ENCODE measurements at regions of chr3 and their contacts with region 1.

Region 1: GRCh38 chr3:115692887-115693524 is 69.7 kb downstream of the GAP43 start:
- H3K4me3 Mint-ChIP-seq: no peak overlapping the region
- H3K27ac Mint-ChIP-seq: no peak overlapping the region
- H3K4me1 Mint-ChIP-seq: no peaks in the 10 kb centered on the region
- H3K27me3 Mint-ChIP-seq: peaks cover 5% of the 10 kb centered on the region

Region 2: DNA sequence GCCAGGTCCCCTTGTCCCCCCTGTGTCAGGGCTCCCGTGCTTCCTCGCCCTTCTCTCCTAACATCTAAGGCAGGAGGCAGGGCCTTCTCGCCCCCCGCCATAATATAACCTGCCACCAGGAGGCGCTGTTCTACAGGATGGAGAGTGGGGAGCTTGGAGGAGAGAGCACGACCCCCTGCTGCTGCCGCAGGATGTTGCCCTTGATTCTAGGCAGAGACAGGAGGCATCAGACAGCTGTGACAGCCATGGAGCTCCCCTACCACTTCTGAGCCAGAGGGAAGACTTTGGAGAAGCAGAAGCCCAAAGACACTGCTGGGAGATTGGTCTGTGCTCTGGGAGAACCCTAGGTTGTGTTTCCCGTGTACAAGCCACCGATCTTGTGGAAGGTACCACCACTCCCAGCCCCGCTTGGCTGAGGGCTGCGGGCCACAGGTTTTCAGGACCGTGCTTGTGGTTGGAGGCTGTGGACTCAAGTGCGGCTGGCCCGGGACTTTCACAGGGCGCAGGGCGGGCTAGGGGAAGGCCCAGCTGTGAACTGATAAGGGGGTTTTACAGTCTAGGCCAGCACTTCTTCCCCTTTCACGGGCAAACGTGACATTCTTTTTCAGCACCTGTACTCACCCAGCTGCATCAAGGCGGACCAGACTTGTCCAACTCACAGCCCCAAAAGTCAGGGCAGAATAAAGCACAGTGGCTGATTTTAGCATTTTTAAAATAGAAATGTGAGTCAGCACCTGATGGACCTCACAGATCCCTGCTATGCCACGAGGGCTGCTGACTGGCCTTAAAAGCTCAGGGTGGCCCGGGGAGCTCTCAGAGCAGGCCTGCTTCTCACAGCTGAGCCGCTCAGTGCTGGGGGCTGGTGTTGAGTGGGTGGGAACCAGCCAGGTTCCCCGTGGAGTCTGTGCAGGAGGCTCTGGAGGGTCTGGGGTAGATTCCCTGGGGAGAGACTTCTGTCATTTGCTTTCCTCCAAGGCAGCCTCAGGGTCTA is 1401.8 kb before region 1 on chr3:
- intact Hi-C with region 1: loop called (anchors 5 kb)
- H3K4me3 Mint-ChIP-seq: no peak overlapping the region
- H3K27ac Mint-ChIP-seq: no peak overlapping the region
- H3K4me1 Mint-ChIP-seq: peaks cover 6% of the 10 kb centered on the region
- H3K27me3 Mint-ChIP-seq: no peaks in the 10 kb centered on the region

Region 3: DNA sequence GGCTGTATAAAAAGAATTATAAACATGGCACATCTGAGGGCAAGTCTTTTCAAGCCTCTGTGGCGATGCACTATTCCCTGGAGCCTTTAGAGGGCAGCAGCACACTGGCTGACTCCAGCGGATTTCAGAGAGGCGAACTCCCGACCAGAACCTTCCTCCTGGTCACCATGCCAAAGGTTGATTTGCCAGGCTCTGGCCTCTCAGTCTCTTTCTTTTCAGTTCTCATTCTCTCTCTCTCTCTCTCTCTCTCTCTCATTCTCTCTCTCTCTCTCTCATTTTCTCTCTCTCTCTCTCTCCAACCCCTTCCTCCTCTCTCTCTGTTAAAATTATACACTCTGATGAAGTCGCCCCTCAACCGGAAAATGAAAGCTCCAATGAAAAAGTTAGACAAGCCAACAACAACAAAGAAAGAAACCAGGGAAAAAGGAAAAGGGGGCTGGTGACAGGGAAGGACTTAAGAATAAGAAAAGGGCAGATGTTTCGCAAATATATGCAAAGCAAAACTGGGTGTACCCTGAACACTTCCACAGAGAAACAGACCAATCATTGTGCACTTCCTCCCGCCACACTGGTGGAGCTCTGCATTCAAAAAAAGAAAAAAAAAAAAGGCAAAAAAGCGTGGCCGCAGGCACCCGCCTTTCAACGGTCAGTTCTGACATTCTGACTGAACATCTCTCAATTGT is 1309.0 kb before region 1 on chr3:
- intact Hi-C with region 1: loop called (anchors 10 kb)
- H3K4me3 Mint-ChIP-seq: peak overlapping the region; percentile 62
- H3K27ac Mint-ChIP-seq: peak overlapping the region; percentile 63
- H3K4me1 Mint-ChIP-seq: peaks cover 2% of the 10 kb centered on the region
- H3K27me3 Mint-ChIP-seq: no peaks in the 10 kb centered on the region

Region 4: GRCh38 chr3:114827495-114827894 is 865.5 kb before region 1 on chr3:
- intact Hi-C with region 1: loop called (anchors 5 kb)
- H3K4me3 Mint-ChIP-seq: no peak overlapping the region
- H3K27ac Mint-ChIP-seq: no peak overlapping the region
- H3K4me1 Mint-ChIP-seq: no peaks in the 10 kb centered on the region
- H3K27me3 Mint-ChIP-seq: no peaks in the 10 kb centered on the region

Region 5: GRCh38 chr3:115038828-115039227 is 654.2 kb before region 1 on chr3:
- intact Hi-C with region 1: loop called (anchors 2 kb)
- H3K4me3 Mint-ChIP-seq: no peak overlapping the region
- H3K27ac Mint-ChIP-seq: no peak overlapping the region
- H3K4me1 Mint-ChIP-seq: no peaks in the 10 kb centered on the region
- H3K27me3 Mint-ChIP-seq: no peaks in the 10 kb centered on the region

Region 6: DNA sequence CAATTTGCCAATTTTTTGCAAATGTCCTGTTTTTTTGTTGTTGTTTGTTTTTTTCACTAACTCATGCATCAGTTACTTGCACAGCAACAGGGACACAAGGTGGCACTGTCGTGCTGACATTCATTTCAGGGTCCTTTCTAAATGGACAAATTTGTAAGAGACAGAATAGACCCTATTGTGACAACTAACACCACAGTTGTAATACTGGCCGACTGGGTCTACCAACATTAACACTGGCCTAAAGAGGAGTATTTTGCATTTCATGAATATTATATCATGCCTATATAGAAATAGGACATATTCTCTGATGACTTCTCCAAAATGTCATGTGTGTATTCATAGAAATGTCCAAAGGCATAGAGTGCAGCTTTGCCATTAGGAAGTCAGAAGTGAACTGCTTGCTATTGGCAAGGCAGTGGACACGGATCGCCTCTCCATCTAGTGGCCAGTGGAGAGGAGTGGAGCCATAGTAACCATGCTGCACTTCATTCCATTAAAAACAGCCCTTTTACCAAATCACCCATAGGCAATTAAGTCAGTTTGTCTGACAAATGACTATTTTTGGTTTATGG is 600.7 kb before region 1 on chr3:
- intact Hi-C with region 1: loop called (anchors 5 kb)
- H3K4me3 Mint-ChIP-seq: no peak overlapping the region
- H3K27ac Mint-ChIP-seq: no peak overlapping the region
- H3K4me1 Mint-ChIP-seq: peaks cover 2% of the 10 kb centered on the region
- H3K27me3 Mint-ChIP-seq: no peaks in the 10 kb centered on the region

Region 7: DNA sequence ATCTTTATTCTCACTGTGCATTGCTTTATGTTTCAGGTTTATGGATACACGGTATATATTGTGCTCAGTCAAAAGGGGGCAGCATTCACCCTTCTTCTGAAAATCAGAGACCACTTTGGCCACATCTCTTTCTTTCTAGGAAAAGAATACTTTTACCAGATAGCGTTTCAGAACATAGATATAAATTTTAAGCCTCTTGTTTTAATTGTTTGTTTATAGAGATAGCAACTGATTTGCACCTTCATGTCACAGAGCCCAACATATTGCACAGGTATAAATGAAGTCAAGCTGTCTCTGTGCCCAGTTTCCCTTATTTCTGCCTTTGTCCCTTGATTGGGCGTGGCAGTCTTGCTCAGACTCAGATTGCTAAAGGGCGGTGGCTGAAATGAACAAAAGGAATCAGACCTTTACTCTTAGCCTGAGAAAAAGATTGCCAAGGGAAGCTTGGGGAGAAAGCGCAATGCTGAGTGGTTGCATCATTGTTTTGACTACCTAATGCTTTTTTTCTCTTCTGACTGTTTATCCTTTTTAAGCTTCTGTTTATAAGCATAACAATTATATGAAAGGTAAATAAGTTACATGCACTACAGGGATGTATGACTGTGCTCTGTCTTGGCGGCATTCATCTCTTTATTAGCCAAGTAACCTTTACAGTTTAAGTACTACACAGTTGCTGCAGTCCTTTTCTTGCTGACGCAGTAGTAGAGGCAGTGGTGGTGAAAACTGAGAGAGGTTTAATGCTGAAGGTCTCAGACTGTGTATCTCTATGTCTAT is 475.1 kb before region 1 on chr3:
- intact Hi-C with region 1: loop called (anchors 2 kb)
- H3K4me3 Mint-ChIP-seq: no peak overlapping the region
- H3K27ac Mint-ChIP-seq: no peak overlapping the region
- H3K4me1 Mint-ChIP-seq: no peaks in the 10 kb centered on the region
- H3K27me3 Mint-ChIP-seq: peaks cover 1% of the 10 kb centered on the region

Measured in dendritic cell treated with granulocyte-macrophage colony-stimulating factor and Interleukin-4, amounts not matched to agents 40 ng/mL and 50 ng/mL, for 4 days (primary cell).